Activated naive CD4-positive, alpha-beta T cell treated with anti-CD3 and anti-CD28 coated beads for 36 hours (primary cell): ENCODE measurements at regions of chr20 and their contacts with region 1.

Region 1: DNA sequence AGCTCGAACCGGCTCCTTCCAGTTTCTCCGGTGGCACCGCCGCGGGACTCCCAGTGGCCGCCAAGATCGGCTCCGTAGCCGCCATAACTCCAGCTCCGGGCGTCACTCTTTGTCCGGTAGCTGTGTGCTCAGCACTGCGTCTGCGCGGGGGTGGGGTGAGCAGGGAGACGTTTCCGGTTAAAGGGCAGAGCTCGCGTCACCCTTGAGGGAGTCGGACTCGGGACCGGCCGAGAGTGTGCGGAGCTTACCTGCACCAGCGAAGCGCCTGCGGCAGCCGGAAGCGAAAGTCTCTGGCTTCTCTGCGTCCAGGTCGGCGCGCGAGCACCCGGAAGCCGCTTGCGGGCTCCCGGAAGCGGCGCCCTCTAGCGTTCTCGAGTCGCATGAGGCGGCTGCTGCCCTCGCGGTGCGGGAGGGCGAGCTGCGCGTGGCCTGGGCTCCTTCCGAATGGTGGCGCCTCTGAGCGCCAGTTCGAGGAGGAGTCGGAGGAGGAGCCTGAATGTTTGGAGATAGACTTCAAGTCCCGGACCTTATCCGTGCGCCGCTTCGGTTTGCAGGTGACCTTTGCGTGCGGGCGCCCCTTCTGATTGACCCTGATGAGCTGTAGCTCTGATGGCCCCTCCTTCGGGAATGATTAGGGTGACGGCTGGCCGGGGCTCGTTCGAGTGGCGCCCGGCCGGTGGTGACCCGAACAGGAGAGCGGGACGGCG is at the start of gene SCAND1:
- DNase-seq: peak; percentile 98
- H3K4me3 Mint-ChIP-seq: peak within 1 kb of the TSS; percentile 99
- H3K27ac Mint-ChIP-seq: peak within 1 kb of the TSS; percentile 98
- H3K4me1 Mint-ChIP-seq: peaks cover 16% of the 10 kb centered on the region
- H3K27me3 Mint-ChIP-seq: no peaks in the 10 kb centered on the region
- total RNA-seq, gene SCAND1: 41.9 to 43.1 TPM

Region 2: GRCh38 chr20:35541783-35542588 is 412.4 kb before region 1 on chr20 and contains the start of gene ERGIC3:
- CTCF ChIA-PET with region 1: no interaction called
- intact Hi-C with region 1: loop called (anchors 2 kb)
- DNase-seq: peak; percentile 98
- H3K4me3 Mint-ChIP-seq: peak within 1 kb of the TSS; percentile 86
- H3K27ac Mint-ChIP-seq: peak within 1 kb of the TSS; percentile 80
- H3K4me1 Mint-ChIP-seq: peaks cover 19% of the 10 kb centered on the region
- H3K27me3 Mint-ChIP-seq: no peaks in the 10 kb centered on the region
- total RNA-seq, gene ERGIC3: 107 to 113 TPM

Region 3: DNA sequence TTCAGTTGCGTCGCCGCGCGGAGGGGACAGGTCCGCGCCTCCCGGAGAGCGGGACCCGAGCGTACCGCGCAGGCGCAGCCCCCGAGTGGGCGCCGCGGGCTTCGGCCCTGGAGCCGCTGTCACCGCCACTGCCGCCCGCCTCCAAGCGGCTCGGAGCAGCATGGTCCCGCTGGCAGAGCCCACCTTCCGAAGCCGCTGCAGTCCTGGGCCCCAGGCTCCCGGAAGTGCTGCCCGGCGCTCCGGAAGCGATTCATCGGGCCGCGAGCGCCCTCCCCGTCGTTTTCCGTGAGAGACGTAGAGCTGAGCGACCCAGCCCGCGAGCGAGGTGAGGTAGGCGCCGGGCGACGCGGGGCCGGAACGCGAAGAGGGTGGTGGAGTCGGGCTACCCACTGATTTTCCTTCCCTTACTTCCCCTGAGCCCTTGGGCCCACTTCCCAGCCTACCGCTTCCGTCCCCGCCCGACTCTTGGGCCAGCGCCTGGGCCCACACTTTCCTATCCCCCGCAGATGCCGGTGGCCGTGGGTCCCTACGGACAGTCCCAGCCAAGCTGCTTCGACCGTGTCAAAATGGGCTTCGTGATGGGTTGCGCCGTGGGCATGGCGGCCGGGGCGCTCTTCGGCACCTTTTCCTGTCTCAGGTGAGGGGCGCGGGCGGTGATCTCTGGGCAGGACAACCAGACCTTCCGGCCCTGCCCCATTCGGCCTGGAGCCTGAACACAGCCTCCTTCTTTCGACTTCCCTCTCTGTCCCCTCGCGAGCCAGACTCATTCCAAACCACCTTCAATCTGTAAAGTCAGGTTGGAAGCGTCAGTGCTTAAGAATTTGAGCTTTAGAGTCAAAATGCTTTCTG is 255.0 kb before region 1 on chr20 and contains the starts of genes NFS1 and ROMO1:
- CTCF ChIA-PET with region 1: no interaction called
- intact Hi-C with region 1: loop called (anchors 5 kb)
- DNase-seq: peak; percentile 89
- H3K4me3 Mint-ChIP-seq: peak within 1 kb of the TSS; percentile 93
- H3K27ac Mint-ChIP-seq: peak within 1 kb of the TSS; percentile 92
- H3K4me1 Mint-ChIP-seq: peaks cover 40% of the 10 kb centered on the region
- H3K27me3 Mint-ChIP-seq: no peaks in the 10 kb centered on the region
- total RNA-seq, gene NFS1: 33.6 to 38.1 TPM
- total RNA-seq, gene ROMO1: 120 to 134 TPM

Region 4: GRCh38 chr20:35942243-35942642 is 12.1 kb before region 1 on chr20:
- CTCF ChIA-PET with region 1: interaction called, 28 read pairs
- intact Hi-C with region 1: no loop called
- DNase-seq: no peak
- H3K4me3 Mint-ChIP-seq: no peak overlapping the region
- H3K27ac Mint-ChIP-seq: no peak overlapping the region
- H3K4me1 Mint-ChIP-seq: no peaks in the 10 kb centered on the region
- H3K27me3 Mint-ChIP-seq: no peaks in the 10 kb centered on the region

Region 5: DNA sequence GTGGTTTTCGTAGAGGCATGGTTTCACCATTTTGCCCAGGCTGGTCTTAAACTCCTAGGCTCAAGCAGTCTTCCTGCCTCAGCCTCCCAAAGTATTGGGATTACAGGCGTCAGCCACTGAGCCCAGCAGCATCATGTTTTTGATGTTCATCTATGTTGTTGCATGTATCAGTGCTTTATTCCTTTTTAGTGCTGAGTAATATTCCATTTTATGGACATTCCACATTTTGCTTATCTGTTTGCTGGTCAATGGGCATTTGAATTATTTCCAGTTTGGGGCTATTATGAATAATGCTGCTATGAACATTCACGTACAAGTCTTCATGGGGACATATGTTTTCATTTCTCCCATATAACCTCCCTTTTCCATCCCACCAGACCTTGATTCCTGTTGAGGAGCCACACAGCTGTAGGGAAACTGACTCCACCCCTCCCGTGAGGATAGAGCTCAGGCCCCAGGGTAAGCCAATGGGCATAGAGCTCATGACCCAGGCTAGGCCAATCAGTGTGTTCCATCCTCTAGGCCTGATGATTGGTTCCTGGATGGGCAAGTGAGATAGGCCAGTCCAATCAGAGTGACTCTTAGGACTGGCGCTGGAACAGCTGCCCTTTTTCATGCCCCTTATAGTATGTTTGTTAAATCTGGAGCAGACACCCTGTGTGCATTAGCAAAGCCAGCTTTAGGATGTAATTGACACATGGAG is 401.3 kb after region 1 on chr20:
- CTCF ChIA-PET with region 1: no interaction called
- intact Hi-C with region 1: no loop called
- DNase-seq: no peak
- H3K4me3 Mint-ChIP-seq: no peak overlapping the region
- H3K27ac Mint-ChIP-seq: no peak overlapping the region
- H3K4me1 Mint-ChIP-seq: no peaks in the 10 kb centered on the region
- H3K27me3 Mint-ChIP-seq: peaks cover 3% of the 10 kb centered on the region

Region 6: DNA sequence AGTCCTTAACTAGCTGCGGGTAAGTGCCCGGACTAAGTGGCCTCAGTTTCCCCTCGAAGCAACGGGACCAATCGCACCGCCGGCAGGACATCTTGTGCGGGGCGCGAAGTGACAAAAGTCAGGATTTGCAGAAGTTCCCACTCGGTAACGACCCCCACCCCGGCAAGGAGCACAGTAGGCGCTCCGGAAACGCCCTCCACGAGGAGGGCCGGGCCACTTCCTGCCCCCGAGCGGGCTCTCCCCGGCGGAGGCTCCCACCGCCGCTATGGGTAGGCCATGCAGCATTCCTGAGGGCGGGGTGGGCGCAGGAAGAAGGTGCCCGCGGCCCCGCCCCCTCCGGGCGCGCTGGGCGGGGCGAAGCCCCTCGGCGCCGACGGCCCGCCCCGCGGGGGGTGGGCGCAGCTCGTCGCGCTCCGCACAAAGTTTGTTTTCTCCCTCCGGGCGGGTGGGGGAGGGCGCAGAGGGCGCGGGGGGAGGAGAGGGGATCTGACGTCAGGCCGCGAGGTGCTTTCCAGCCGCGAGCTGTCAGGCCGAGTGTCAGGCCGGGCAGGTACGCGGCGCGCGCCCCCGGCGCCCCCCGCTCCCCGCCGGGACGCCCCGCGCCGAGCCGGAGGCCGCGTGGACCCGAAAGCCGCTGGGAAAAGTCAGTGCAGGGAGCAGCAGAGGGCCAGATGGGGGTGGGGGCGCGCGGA is 618.9 kb after region 1 on chr20 and contains the start of gene TGIF2:
- CTCF ChIA-PET with region 1: no interaction called
- intact Hi-C with region 1: loop called (anchors 5 kb)
- DNase-seq: peak; percentile 90
- H3K4me3 Mint-ChIP-seq: peak within 1 kb of the TSS; percentile 91
- H3K27ac Mint-ChIP-seq: peak within 1 kb of the TSS; percentile 93
- H3K4me1 Mint-ChIP-seq: peaks cover 35% of the 10 kb centered on the region
- H3K27me3 Mint-ChIP-seq: no peaks in the 10 kb centered on the region
- total RNA-seq, gene TGIF2: 32.2 to 33.6 TPM